Mammary epithelial cell (primary cell): ENCODE measurements at regions of chr3 and their contacts with region 1.

Region 1: DNA sequence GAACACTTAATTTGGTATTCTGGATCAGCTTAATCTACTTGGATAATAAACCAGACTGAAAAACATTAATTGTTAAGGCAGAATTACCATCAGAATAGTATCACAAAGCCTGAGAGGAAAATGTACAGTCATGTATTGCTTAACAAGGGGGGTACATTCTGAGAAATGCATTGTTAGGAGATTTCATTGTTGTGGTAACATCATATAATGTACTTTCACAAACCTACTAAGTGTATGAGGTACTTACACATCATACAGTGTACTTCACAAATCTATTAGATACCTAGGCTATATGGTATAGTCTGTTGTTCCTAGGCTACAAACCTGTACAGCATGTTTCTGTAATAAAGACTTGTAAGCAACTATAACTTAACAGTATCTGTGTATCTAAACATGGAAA is 68.2 kb downstream of the NBEAL2 start:
- DNase-seq: no peak
- H3K4me3 ChIP-seq: no peak overlapping the region
- H3K27ac ChIP-seq: no peak overlapping the region
- H3K4me1 ChIP-seq: no peaks in the 10 kb centered on the region
- H3K27me3 ChIP-seq: no peaks in the 10 kb centered on the region
- CTCF ChIP-seq: no peak

Region 2: DNA sequence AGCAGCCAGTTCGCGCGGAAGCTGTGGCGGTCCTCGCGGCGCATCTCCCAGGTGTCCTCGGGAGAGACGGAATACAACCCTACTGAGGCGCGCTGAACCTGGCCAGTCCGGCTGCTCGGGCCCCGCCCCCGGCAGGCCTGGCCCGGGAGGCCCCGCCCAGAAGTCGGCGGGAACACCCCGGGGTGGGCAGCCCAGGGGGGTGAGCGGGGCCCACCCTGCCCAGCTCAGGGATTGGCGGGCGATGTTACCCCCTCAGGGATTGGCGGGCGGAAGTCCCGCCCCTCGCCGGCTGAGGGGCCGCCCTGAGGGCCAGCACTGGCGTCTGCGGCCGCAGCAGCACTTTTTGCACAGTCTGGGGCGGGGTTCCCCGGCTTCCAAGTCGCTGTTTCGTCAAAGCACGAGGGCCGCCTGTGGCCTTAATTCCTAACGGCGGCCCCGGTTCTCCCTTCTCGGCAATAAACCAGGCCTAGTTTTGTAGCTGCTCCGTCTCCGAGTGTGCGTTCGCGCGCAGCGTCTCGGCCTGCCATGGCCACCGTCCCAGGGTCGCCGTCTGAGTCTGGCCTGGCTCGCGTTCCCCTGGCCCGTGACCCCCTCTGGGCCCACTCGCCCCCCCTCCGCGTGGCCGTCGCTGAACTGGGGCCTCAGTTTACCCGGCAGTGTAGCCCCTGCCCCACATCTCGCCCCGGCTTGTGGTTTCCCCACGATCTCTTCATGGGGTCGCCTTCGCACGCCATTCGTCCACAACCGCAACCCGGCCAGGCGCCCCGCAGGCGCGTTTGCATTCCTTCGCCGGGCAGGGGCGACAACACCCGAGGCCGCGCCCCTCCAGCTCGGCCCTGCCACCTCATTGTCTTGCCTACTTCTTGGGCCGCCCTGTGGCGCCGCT is 38.2 kb before region 1 on chr3:
- CTCF ChIA-PET with region 1: no interaction called
- dilution Hi-C with region 1: loop called (anchors 5 kb)
- in situ Hi-C with region 1: no loop called
- intact Hi-C with region 1: no loop called
- DNase-seq: peak; percentile 20
- H3K4me3 ChIP-seq: peak overlapping the region in 1 of 3 experiments; percentile 20
- H3K27ac ChIP-seq: no peak overlapping the region
- H3K4me1 ChIP-seq: peaks cover 5% of the 10 kb centered on the region
- H3K27me3 ChIP-seq: no peaks in the 10 kb centered on the region
- CTCF ChIP-seq: no peak

Region 3: DNA sequence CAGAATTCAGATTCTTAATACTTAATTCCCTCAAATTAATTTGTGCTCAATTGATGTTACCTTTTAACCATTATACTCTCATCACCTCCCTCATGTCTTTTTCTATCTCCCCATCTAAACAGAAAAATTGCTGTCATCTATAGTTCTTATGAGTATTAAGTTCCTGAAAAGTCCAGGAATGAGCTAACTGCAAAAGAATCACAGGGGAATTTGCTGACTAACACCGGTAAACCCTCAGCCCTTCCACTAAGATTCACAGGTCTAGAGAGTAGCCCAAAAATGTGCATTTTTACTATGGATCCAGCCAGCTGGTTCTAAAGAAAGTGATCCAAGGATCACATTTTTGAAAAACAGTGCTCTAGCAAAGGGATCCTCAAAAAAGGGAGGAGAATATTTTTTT is 49.3 kb after region 1 on chr3:
- CTCF ChIA-PET with region 1: no interaction called
- dilution Hi-C with region 1: no loop called
- in situ Hi-C with region 1: no loop called
- intact Hi-C with region 1: no loop called
- DNase-seq: peak; percentile 45
- H3K4me3 ChIP-seq: no peak overlapping the region
- H3K27ac ChIP-seq: no peak overlapping the region
- H3K4me1 ChIP-seq: no peaks in the 10 kb centered on the region
- H3K27me3 ChIP-seq: no peaks in the 10 kb centered on the region
- CTCF ChIP-seq: no peak

Region 4: GRCh38 chr3:47429476-47430270 is 382.0 kb after region 1 on chr3:
- CTCF ChIA-PET with region 1: no interaction called
- dilution Hi-C with region 1: no loop called
- in situ Hi-C with region 1: no loop called
- intact Hi-C with region 1: no loop called
- DNase-seq: no peak
- H3K4me3 ChIP-seq: no peak overlapping the region
- H3K27ac ChIP-seq: no peak overlapping the region
- H3K4me1 ChIP-seq: no peaks in the 10 kb centered on the region
- H3K27me3 ChIP-seq: no peaks in the 10 kb centered on the region
- CTCF ChIP-seq: no peak